Posterior vena cava (tissue), 2 donors: ENCODE measurements at regions of chr9 and their contacts with region 1.

Region 1: GRCh38 chr9:4382722-4383317 is 83.0 kb upstream of the GLIS3 start:
- DNase-seq: no peak

Region 2: DNA sequence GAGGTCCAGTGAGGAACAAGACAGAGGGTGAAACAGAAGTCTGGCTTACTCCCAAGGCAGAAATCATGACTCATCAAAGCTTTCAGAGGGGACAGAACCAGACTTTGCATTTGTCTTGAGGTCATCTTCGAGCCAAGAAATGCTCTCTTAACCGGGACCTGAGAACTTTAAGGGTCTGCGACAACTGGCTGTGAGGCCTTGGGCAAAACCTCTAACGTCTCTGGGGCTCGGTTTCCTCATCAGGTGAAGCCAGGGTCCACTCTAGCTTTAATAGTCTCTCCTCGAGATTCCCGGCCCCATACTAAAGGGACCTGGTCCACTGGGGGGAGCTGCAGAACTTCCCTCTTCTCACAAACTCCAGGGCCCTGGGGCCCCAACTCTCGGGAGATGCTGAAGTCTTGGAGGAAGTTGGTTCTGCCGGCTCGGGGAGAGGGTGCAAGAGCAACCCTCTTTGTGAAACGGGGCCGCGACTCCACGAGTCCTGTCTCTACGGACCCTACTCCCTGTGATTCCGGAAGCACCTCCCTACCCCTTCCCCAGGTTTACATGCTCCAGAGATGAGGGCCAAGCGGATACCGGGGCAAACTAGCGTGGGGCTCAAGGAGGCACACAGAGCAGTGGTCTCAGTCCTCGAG is 85.6 kb before region 1 on chr9:
- intact Hi-C with region 1: no loop called
- DNase-seq: peak; percentile 91

Region 3: GRCh38 chr9:4630836-4631235 is 248.0 kb after region 1 on chr9:
- intact Hi-C with region 1: loop called in 1 of 2 experiments (anchors 10 kb)
- DNase-seq: no peak

Region 4: DNA sequence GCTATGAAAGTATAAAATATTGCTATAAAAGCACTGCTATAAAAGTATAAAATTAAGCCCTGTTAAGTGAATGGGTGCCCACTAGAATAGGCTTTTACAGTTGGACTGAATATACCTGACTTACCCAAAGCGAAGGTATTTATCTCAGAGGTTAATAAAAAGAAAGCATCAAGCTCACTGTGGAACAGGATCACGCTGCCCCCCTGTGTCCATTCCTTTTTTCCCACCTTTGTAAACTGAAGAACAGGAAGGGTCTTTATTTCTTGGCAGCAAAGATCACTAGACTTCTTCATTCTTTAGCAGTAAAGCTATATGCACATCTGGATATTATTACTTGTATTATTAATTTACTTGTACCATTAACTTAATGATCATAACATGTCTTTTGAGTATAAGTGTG is 257.2 kb after region 1 on chr9:
- intact Hi-C with region 1: loop called (anchors 10 kb)
- DNase-seq: no peak

Region 5: GRCh38 chr9:4781408-4781807 is 398.6 kb after region 1 on chr9:
- intact Hi-C with region 1: no loop called
- DNase-seq: no peak